Heart left ventricle (tissue), 16 donors: ENCODE measurements at regions of chr10 and their contacts with region 1.

Region 1: DNA sequence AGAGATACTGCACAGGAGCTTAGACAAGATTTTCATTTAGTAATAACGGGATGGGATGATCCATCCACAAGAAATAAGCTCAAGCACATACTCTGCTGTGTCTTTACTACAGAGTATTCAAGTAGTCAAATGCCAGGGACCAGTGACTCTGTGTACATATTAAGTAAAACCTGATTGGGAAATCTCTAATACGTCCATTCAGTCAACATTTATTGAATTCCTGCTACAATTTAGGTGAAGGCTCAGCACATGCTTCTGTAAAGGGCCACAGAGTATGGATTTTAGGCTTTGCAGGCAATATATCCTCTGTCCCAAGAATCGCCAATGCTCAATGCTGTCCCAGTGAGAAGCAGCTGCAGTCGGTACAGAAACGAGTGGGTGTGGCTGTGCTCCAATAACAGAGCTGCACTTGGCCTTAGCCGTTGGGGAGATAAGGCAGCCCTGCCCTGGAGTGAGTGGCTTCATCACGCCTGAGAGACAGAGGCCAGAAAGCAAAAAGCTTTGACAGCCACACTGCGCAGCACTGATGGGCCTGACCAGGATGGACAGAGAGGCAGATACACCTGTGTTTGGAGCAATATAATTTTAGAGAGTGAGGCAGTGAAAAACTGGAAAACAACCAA is 186.8 kb downstream of the PARD3 start:
- DNase-seq: peak; percentile 76 to 89 (median 81)
- ATAC-seq: peak; percentile 90 to 98 (median 96)
- H3K4me3 ChIP-seq: no peak overlapping the region
- H3K27ac ChIP-seq: peak overlapping the region in 1 of 12 donors; percentile 26
- H3K4me1 ChIP-seq: peaks cover 0 to 34% (median 12%) of the 10 kb centered on the region in 12 donors
- H3K27me3 ChIP-seq: no peaks in the 10 kb centered on the region
- CTCF ChIP-seq: no peak
- POLR2A ChIP-seq: no peak

Region 2: DNA sequence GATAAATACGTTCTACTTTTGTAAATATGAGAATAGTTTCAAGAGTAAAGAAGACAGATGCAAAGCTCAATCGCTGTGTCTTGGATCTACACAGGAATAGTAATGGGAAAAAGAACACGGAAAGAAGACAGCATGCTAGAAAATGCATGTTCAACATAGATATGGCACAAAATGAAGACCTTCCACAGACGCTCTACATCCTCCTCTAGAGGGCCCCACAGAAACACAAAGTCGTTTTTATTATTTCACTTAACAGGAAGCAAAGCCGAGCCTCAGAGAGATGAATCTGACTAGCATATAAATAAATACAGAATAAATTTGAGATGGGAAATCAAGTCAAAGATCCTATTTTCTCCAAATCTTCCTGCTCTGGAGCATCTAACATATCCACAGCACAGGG is 105.7 kb before region 1 on chr10:
- intact Hi-C with region 1: loop called in 1 of 10 experiments (anchors 10 kb)
- DNase-seq: no peak
- ATAC-seq: no peak
- H3K4me3 ChIP-seq: peak overlapping the region in 5 of 12 donors; percentile 10 to 26 (median 22)
- H3K27ac ChIP-seq: no peak overlapping the region
- H3K4me1 ChIP-seq: peaks cover 0 to 15% (median 6%) of the 10 kb centered on the region in 12 donors
- H3K27me3 ChIP-seq: no peaks in the 10 kb centered on the region
- CTCF ChIP-seq: peak in 11 of 12 donors; percentile 16 to 57 (median 34)
- POLR2A ChIP-seq: no peak